B cell (primary cell): ENCODE measurements at regions of chr21 and their contacts with region 1.

Region 1: DNA sequence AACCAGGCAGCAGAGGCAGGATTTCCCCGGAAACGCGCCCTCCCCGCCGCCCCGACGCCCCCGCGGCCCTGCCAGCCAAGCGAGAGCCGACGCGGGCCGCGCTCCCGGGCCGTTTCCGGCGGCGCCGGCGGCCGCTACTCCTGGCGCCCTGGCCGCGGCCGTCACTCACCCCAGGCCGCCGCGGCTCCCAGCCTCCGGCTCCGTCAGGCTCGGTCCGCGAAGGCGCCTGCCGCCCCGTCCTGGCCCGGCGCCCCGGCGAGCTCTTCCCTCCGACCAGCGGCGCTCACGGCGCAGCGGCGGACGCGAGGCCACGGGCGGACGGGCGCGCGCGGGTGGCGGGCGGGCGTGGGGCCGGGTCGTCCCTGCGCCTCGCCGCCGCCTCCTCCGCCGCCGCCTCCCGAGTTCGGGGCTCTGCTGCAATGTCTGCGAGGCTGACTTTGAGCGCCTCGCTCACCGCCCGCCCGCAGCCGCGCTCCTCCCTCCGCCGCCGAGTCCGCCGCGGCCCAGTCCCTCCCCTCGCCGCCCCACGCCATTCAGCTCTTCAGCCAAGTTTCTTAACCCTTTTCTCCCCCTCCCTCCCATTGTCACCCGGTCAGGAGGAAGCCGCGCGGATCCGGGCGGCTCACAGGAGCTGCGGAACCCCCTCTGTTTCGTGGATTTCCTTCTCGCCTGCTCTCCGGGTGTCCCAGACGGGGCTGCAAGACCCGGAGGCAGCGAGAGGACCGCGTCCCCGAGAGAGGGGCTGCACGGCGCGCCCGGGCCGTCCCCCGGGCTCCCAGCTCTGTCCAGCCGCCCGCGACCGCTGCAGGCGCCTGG is at the start of gene NRIP1:
- DNase-seq: peak; percentile 93
- ATAC-seq: peak; percentile 80
- H3K4me3 ChIP-seq: peak within 1 kb of the TSS; percentile 72 to 95 (median 89)
- H3K4me3 Mint-ChIP-seq: peak within 1 kb of the TSS; percentile 96
- H3K27ac ChIP-seq: peak within 1 kb of the TSS; percentile 93 to 94
- H3K27ac Mint-ChIP-seq: peak within 1 kb of the TSS; percentile 96
- H3K4me1 ChIP-seq: peaks cover 32 to 43% of the 10 kb centered on the region in 2 donors
- H3K4me1 Mint-ChIP-seq: peaks cover 51% of the 10 kb centered on the region
- H3K27me3 ChIP-seq: peaks cover 0 to 4% (median 0%) of the 10 kb centered on the region in 4 experiments
- H3K27me3 Mint-ChIP-seq: peaks cover 5% of the 10 kb centered on the region
- CTCF ChIP-seq: no peak
- total RNA-seq, gene NRIP1: 32.1 and 35.9 TPM in 2 replicates

Region 2: DNA sequence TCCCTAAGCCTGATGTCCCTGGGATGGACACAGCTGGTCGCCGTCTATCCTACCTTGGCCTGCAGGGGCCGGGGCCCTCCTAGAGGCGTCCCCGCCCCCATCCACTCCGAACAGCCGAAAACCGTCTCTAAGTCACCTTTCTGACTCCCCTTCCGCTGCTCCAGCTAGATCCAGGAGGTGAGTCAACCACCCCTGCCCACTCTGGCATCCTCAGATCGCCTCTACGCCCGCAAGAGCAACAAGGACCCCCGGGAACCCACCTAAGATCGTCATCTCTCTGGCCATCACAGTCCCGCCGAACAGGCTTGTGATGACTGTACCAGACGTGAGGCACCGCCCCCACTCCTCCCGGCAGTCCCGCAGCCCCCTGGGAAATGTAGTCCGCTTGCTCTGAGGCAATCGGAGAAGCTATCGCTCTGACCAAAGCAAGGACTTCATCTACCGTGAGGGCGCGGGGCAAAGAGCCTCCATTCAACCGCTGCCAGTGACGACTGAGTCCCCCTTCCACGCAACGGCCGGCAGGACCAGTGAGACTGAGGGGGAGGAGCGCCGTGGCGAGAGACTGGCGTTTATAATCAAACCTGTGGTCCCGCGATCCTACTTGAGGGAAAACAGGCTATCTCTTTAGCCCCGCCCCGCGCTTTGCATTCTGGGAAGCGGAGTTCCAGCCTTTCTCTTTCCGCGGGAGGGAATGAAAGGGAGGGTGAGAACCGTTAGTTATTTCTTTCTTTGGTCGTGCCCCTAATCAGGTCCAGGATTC is 681.8 kb before region 1 on chr21 and contains the start of gene HSPA13:
- CTCF ChIA-PET with region 1: interaction called, 3 read pairs
- POLR2A ChIA-PET with region 1: no interaction called
- intact Hi-C with region 1: loop called (anchors 1 kb)
- DNase-seq: peak; percentile 100
- ATAC-seq: peak; percentile 93
- H3K4me3 ChIP-seq: peak within 1 kb of the TSS; percentile 85 to 95 (median 88)
- H3K4me3 Mint-ChIP-seq: peak within 1 kb of the TSS; percentile 100
- H3K27ac ChIP-seq: peak within 1 kb of the TSS; percentile 91 to 96
- H3K27ac Mint-ChIP-seq: peak within 1 kb of the TSS; percentile 98
- H3K4me1 ChIP-seq: peaks cover 10 to 11% of the 10 kb centered on the region in 2 donors
- H3K4me1 Mint-ChIP-seq: peaks cover 37% of the 10 kb centered on the region
- H3K27me3 ChIP-seq: no peaks in the 10 kb centered on the region
- H3K27me3 Mint-ChIP-seq: no peaks in the 10 kb centered on the region
- CTCF ChIP-seq: no peak
- total RNA-seq, gene HSPA13: 19.1 and 19.3 TPM in 2 replicates

Region 3: DNA sequence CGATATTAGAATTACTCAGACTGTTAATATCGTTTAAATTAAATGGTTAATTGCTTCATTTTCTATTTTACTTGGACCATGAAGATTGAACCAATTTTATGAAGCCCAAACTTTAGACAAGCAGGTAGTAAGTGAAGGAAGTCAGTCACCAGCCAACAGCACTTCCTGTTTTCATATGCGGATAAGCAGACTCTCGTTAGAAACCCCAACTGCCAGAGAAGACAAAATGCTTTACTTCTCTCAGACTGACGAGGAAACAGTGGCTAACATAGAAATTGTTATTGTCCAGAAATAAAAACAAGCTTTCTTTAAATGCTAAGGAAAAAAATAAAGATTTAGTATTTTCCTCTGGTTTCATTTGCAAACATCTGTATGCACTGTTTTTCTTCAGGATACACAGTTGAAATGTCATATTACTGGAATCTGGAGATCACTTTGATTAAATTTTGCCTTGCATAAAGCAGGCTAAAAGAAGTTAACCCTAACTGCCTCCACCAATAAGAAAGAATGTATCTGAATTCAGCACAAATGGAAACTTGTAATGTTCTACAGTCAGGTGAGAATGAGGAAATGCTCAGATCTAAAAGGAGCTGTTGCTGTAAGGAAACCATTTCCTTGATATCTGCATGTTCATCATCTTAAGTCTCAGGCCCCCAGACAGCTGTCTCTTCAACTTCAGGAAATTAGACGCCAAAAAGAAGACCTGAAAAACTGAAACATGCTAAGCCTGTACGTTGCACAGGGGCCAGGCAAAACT is 388.8 kb before region 1 on chr21:
- CTCF ChIA-PET with region 1: no interaction called
- POLR2A ChIA-PET with region 1: interaction called, 3 read pairs
- intact Hi-C with region 1: loop called (anchors 5 kb)
- DNase-seq: peak; percentile 67
- ATAC-seq: peak; percentile 80
- H3K4me3 ChIP-seq: peak overlapping the region in 3 of 5 experiments; percentile 10 to 47 (median 24)
- H3K4me3 Mint-ChIP-seq: peak overlapping the region; percentile 57
- H3K27ac ChIP-seq: peak overlapping the region; percentile 74 to 85
- H3K27ac Mint-ChIP-seq: peak overlapping the region; percentile 91
- H3K4me1 ChIP-seq: peaks cover 44 to 46% of the 10 kb centered on the region in 2 donors
- H3K4me1 Mint-ChIP-seq: peaks cover 59% of the 10 kb centered on the region
- H3K27me3 ChIP-seq: no peaks in the 10 kb centered on the region
- H3K27me3 Mint-ChIP-seq: no peaks in the 10 kb centered on the region
- CTCF ChIP-seq: no peak

Region 4: DNA sequence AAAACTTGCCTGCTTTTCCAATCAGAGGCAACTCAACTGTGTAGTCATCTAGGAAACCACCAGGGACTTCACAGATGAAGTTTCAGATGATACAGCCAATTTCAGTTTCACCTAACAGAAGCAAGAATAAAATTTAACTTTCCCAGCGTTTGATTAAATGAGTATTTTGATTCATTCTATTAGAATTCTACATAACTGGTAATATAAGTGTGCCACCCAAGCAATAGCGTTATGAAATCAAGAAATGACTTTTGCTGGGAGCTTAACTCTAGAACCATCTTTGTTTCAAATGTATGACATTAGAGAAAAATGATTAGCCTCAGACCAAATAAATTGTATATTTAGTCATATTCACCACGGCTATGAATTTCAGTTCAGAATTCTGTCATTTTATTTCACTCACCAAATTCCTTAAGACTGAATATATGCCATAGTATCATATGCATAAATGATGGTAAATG is 239.2 kb before region 1 on chr21:
- CTCF ChIA-PET with region 1: no interaction called
- POLR2A ChIA-PET with region 1: no interaction called
- intact Hi-C with region 1: no loop called
- DNase-seq: no peak
- ATAC-seq: no peak
- H3K4me3 ChIP-seq: no peak overlapping the region
- H3K4me3 Mint-ChIP-seq: no peak overlapping the region
- H3K27ac ChIP-seq: no peak overlapping the region
- H3K27ac Mint-ChIP-seq: no peak overlapping the region
- H3K4me1 ChIP-seq: no peaks in the 10 kb centered on the region
- H3K4me1 Mint-ChIP-seq: no peaks in the 10 kb centered on the region
- H3K27me3 ChIP-seq: no peaks in the 10 kb centered on the region
- H3K27me3 Mint-ChIP-seq: no peaks in the 10 kb centered on the region
- CTCF ChIP-seq: no peak

Region 5: DNA sequence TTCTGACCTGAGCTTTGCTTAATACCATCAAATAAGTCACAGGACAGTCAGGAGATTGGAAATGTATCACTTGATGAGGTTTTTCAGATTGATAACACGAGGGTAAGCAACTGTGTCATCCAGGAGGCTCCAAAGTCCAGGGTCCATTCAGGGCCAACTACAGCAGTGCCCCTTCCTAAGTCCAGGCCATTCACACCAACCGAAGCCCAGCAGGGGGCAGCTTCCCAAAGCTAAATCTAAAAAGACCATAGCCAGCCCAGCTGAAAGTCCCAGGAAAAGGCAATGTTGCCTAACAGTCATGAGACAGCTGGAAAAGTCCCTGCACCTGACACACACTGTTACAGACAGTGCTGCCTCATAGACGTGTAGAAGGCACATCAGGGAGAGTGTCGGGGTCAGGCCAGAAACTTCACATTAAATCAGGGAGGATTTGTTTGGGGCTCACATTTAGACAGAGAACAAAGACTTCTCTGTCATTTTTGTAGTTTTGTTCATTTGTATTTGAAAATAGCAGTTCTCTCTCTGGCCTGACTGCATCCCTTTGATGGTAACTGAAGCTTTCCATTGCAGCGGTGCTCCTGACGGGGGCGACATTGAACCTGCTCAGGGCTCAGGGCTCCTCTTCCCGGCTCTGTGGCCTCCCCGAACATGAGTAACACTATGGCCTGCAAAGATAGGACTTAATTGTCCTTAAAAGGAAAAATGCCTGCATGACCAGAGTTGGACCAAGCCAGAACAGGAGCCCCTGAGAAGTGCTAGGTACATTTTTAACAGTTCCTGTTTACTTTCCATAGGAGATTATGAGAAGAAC is 200.4 kb before region 1 on chr21:
- CTCF ChIA-PET with region 1: no interaction called
- POLR2A ChIA-PET with region 1: no interaction called
- intact Hi-C with region 1: loop called (anchors 5 kb)
- DNase-seq: peak; percentile 41
- ATAC-seq: peak; percentile 72
- H3K4me3 ChIP-seq: no peak overlapping the region
- H3K4me3 Mint-ChIP-seq: no peak overlapping the region
- H3K27ac ChIP-seq: no peak overlapping the region
- H3K27ac Mint-ChIP-seq: no peak overlapping the region
- H3K4me1 ChIP-seq: peaks cover 13 to 17% of the 10 kb centered on the region in 2 donors
- H3K4me1 Mint-ChIP-seq: peaks cover 42% of the 10 kb centered on the region
- H3K27me3 ChIP-seq: no peaks in the 10 kb centered on the region
- H3K27me3 Mint-ChIP-seq: no peaks in the 10 kb centered on the region
- CTCF ChIP-seq: peak; percentile 47

Region 6: DNA sequence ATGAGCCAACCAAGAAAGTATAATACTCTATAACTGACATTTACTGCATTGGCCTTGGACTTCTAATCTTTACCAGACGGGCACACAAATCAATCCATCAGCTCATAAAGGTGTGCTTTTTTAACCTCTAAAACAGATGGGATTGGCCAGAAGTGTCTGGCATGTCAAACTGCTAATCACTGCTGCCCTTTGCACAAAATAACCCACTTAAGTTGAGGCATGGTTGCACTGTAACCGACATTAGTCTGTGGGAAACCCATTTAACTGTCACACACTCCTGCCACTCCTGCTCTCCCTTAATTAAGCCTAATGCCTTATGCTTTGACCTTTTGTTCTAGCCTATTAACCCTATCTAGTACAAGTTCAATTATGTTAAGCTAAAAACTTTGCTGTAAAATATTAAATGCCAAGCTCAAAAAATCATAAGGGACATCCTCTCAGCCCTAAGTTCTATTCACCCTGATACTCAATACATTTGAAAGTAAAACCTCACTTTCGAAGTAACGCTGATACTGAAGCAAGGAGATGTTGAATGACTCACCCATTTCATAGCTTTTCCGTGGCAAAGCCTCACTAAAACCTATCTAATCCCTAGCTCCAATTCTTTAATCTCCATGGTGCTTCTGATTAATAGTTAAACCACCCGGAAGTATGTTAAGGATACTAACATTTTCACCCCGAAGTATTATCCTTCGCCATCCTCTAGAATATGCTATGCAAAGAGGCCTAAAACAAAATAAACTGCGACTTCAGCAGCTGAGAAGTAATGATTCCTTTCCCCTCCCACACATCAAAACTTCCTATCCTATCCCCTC is 12.9 kb before region 1 on chr21:
- CTCF ChIA-PET with region 1: no interaction called
- POLR2A ChIA-PET with region 1: interaction called, 3 read pairs
- intact Hi-C with region 1: loop called (anchors 1 kb)
- DNase-seq: no peak
- ATAC-seq: peak; percentile 45
- H3K4me3 ChIP-seq: peak overlapping the region in 4 of 5 experiments; percentile 9 to 32 (median 20)
- H3K4me3 Mint-ChIP-seq: peak overlapping the region; percentile 75
- H3K27ac ChIP-seq: no peak overlapping the region
- H3K27ac Mint-ChIP-seq: peak overlapping the region; percentile 34
- H3K4me1 ChIP-seq: peaks cover 28 to 53% of the 10 kb centered on the region in 2 donors
- H3K4me1 Mint-ChIP-seq: peaks cover 75% of the 10 kb centered on the region
- H3K27me3 ChIP-seq: no peaks in the 10 kb centered on the region
- H3K27me3 Mint-ChIP-seq: no peaks in the 10 kb centered on the region
- CTCF ChIP-seq: no peak

Region 7: DNA sequence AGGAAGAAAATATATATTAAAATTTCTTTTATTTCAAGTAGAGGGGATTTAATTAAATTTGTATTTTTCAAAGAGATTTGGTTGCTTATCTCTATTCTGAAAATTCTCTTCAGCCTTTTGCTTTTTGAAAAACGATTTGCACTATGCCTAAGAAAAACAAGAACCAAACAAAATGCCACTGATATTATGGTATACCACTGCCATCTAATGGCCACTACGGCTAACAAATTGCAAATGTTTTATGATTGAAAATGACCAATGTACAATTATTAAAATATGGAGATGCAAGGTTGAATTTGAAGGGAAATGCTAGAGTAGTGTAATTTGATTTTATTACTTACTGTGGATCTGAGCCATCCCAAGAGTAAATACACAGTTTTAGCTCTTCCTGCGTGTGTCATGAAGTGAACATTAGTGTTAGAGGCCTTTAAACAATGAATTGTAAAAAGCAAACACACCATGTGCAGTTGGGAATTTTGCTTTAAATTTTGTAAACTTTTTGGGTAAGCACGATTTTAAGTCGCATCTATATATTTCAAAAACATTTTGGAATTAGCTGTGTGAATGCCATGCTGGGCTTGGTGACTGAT is 527.6 kb after region 1 on chr21:
- CTCF ChIA-PET with region 1: no interaction called
- POLR2A ChIA-PET with region 1: no interaction called
- intact Hi-C with region 1: loop called (anchors 5 kb)
- DNase-seq: peak; percentile 62
- ATAC-seq: peak; percentile 33
- H3K4me3 ChIP-seq: no peak overlapping the region
- H3K4me3 Mint-ChIP-seq: no peak overlapping the region
- H3K27ac ChIP-seq: no peak overlapping the region
- H3K27ac Mint-ChIP-seq: no peak overlapping the region
- H3K4me1 ChIP-seq: no peaks in the 10 kb centered on the region
- H3K4me1 Mint-ChIP-seq: no peaks in the 10 kb centered on the region
- H3K27me3 ChIP-seq: no peaks in the 10 kb centered on the region
- H3K27me3 Mint-ChIP-seq: peaks cover 9% of the 10 kb centered on the region
- CTCF ChIP-seq: peak; percentile 85